Activated T-helper 1 cell treated with anti-CD3 and anti-CD28 coated beads, Interleukin-12 subunit alpha, Interleukin-12 subunit beta, Interleukin-2, Interleukin-4 antibody, amounts not matched to agents 30 ng/mL and 10 ng/mL and 1 ng/mL, durations not matched to agents 14 hours and 24 hours and 36 hours (primary cell): ENCODE measurements at regions of chr1 and their contacts with region 1.

Region 1: GRCh38 chr1:10209905-10210810 is at the start of gene KIF1B:
- DNase-seq: peak; percentile 97
- H3K4me3 Mint-ChIP-seq: peak within 1 kb of the TSS; percentile 92
- H3K27ac Mint-ChIP-seq: peak within 1 kb of the TSS; percentile 83
- H3K4me1 Mint-ChIP-seq: peaks cover 35% of the 10 kb centered on the region
- H3K27me3 Mint-ChIP-seq: peaks cover 12% of the 10 kb centered on the region
- total RNA-seq, gene KIF1B: 15.8 and 19.0 TPM in 2 replicates

Region 2: GRCh38 chr1:10170239-10170574 is 40.0 kb before region 1 on chr1:
- intact Hi-C with region 1: loop called (anchors 1 kb)
- DNase-seq: peak; percentile 22
- H3K4me3 Mint-ChIP-seq: peak overlapping the region; percentile 71
- H3K27ac Mint-ChIP-seq: peak overlapping the region; percentile 86
- H3K4me1 Mint-ChIP-seq: peaks cover 50% of the 10 kb centered on the region
- H3K27me3 Mint-ChIP-seq: no peaks in the 10 kb centered on the region

Region 3: DNA sequence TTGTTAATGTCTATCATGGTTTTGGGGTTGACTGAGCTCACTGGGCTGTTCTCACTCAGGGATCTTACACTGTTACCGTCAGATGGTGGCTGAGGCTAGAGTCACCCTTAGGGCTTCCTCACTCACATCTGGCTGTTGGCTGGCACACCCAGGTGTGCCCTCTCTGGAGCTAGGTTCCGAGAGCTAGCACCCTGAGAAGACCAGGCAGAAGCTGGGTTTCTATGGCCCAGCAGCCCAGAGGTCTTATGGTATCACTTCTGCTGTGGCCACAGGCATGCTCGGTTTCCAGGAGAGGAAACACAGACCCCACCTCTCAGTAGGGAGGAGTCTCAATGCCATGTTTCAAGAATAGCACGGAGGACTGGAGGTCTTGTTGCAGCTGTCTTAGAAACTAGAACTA is 20.5 kb before region 1 on chr1:
- intact Hi-C with region 1: no loop called
- DNase-seq: no peak
- H3K4me3 Mint-ChIP-seq: no peak overlapping the region
- H3K27ac Mint-ChIP-seq: no peak overlapping the region
- H3K4me1 Mint-ChIP-seq: no peaks in the 10 kb centered on the region
- H3K27me3 Mint-ChIP-seq: peaks cover 4% of the 10 kb centered on the region

Region 4: DNA sequence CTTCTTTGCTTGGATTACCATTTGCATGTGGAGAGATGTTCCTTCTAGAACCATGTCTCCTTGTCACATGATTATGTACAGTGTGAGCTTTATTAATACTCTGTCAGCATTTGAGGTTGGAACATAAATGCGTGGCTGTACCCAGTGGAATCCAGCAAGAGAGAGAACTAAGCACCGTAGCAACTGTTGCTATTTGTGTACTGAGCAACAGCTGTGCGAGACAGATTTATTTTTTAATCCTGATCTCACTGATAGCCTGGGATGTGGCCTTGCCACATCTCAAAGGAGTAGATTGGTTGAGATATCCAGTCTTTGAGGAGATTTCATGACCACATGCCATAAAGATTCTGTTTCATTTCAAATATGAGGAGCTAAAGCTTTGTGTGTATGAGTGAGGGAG is 43.6 kb after region 1 on chr1:
- intact Hi-C with region 1: loop called (anchors 5 kb)
- DNase-seq: no peak
- H3K4me3 Mint-ChIP-seq: no peak overlapping the region
- H3K27ac Mint-ChIP-seq: peak overlapping the region; percentile 8
- H3K4me1 Mint-ChIP-seq: peaks cover 7% of the 10 kb centered on the region
- H3K27me3 Mint-ChIP-seq: no peaks in the 10 kb centered on the region

Region 5: DNA sequence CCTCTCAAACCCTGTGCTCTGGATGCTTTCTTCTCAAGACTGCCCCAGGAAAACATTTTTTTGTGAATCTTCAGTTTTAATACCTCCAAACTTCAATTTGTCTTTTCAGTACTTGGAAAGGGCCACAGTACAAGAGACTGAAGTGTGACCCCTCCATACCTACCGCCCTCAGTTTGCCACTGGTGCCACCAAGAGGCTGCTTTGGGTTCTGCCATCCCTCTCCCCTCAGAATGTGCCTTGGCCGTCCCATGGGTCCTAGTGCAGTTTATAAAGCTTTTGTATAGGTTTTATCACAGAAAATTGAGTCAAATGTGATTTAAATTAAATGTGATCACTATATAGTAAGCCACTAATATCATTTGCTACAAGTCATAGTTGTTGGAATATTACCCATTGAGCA is 127.9 kb after region 1 on chr1:
- intact Hi-C with region 1: loop called (anchors 1 kb)
- DNase-seq: no peak
- H3K4me3 Mint-ChIP-seq: no peak overlapping the region
- H3K27ac Mint-ChIP-seq: no peak overlapping the region
- H3K4me1 Mint-ChIP-seq: no peaks in the 10 kb centered on the region
- H3K27me3 Mint-ChIP-seq: no peaks in the 10 kb centered on the region

Region 6: DNA sequence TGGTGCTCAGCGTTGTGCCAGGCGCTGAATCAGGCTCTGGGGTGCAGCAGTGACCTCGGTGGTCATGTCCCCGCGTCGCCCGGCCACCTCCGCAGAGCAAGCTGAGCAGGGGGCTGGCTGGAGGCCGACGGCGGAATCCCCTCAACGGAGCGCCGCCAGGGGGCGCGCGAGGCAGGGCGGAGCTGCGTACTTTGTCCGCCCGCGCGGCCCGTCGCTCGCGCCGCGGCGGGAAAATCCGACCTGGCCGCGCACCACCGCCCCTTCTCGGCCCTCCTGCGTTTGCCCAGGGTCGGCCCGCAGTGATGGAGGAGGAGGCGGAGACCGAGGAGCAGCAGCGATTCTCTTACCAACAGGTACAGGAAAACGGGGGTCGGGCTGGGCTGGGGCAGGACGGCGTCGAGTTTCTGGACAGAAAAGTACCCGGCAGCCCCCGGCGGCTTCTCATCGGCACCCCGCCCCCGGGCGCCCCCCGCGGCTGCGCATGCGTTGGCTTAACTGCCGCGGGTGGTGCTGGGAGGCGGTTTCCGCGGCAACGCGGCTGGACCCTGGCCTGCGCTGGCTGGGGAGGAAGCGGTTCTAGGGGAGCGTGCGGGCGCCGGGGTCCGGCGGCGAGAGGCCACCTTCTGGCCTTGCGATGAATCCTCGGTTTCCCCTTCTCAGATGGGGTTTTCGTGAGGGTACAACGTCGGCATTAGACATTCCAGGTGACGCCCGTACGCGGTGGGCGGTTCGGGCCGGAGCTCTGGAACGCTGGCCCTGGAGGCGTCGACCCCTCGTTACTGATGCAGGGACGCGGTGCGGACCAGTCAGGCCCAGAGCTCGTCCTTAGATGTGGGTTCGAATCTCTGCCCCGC is 220.3 kb after region 1 on chr1 and contains the start of gene CENPS:
- intact Hi-C with region 1: loop called (anchors 1 kb)
- DNase-seq: peak; percentile 86
- H3K4me3 Mint-ChIP-seq: peak within 1 kb of the TSS; percentile 92
- H3K27ac Mint-ChIP-seq: peak within 1 kb of the TSS; percentile 92
- H3K4me1 Mint-ChIP-seq: peaks cover 24% of the 10 kb centered on the region
- H3K27me3 Mint-ChIP-seq: no peaks in the 10 kb centered on the region
- total RNA-seq, gene CENPS: 22.1 and 23.4 TPM in 2 replicates

Region 7: DNA sequence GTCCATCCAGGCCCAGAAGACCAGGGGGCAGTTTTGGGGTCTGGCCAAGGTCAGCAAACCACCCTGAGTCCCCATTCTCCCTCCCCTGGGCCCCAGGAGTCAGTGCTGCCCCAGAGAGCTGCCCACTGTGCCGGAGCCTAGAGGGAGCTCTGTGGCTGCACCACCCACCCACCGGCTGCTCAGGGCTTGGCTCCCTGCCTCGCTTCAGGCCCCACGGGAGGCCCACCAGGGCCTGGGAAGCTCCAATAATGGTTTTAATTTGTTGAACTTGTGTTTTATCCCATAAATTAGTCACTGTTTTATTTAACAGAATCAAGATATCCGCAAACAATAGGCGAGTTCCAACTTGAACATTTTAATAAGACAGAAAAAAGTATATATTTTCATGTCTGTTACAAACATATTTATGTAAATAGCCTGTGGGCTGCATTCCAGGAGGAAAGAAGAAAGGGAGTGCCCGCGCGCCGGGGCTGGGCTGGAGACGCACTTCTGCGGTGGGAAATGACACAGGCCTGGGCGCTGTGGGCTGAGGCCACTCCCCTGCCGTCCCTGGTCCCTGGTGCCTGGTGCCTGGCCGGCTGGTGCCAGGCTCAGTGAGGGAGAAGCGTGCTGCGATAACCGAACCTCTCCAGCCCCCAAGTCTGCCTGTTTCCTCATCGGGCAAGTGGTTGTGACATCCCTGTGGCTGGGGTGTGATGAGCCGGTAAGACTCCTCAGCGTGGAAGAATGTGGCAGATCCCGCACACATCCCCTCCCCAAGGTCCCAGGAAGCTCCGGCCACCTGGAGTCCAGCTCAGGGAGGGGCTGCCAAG is 425.1 kb after region 1 on chr1:
- intact Hi-C with region 1: no loop called
- DNase-seq: no peak
- H3K4me3 Mint-ChIP-seq: no peak overlapping the region
- H3K27ac Mint-ChIP-seq: no peak overlapping the region
- H3K4me1 Mint-ChIP-seq: no peaks in the 10 kb centered on the region
- H3K27me3 Mint-ChIP-seq: peaks cover 5% of the 10 kb centered on the region